AG04450 (cell line): ENCODE measurements at regions of chr1 and their contacts with region 1.

Region 1: GRCh38 chr1:15288173-15288926 is 41.3 kb downstream of the FHAD1 start:
- DNase-seq: no peak
- H3K4me3 ChIP-seq: no peak overlapping the region
- H3K27ac ChIP-seq: no peak overlapping the region
- H3K27me3 ChIP-seq: no peaks in the 10 kb centered on the region
- CTCF ChIP-seq: no peak

Region 2: DNA sequence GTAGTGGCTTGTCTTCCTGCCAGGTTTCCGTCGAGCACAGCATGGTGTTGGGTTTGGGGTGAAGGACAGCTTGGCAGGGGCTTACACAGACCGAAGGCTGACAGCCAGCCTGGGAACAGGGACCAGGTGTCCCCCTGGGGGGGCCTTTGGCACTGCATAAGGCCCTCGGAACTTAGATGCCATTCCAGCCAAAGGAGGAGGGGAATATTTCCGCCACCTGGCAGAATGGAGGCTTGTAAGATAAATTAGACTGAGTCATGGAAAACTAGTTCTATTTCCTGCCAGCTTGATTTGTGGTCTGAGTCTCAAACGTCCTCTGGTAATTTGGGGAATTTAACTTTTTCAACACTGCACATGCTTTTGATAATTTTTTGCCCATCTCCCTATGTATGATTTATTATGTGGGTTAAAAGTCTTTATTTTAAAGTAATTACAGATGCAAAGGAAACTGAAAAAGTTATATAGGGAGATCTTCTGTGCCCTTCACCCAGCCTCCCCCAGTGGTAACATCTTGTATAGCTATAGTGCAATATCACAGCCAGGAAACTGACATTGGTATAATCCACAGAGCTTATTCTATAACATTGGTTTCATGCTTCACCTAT is 146.3 kb before region 1 on chr1:
- CTCF ChIA-PET with region 1: no interaction called
- POLR2A ChIA-PET with region 1: no interaction called
- DNase-seq: no peak
- H3K4me3 ChIP-seq: no peak overlapping the region
- H3K27ac ChIP-seq: no peak overlapping the region
- H3K27me3 ChIP-seq: peaks cover 11% of the 10 kb centered on the region
- CTCF ChIP-seq: peak; percentile 12; the same call in 1 of the 2 replicates

Region 3: GRCh38 chr1:15304701-15305467 is 16.5 kb after region 1 on chr1:
- CTCF ChIA-PET with region 1: interaction called, 14 read pairs
- POLR2A ChIA-PET with region 1: no interaction called
- DNase-seq: no peak
- H3K4me3 ChIP-seq: no peak overlapping the region
- H3K27ac ChIP-seq: no peak overlapping the region
- H3K27me3 ChIP-seq: peaks cover 3% of the 10 kb centered on the region
- CTCF ChIP-seq: peak; percentile 74

Region 4: DNA sequence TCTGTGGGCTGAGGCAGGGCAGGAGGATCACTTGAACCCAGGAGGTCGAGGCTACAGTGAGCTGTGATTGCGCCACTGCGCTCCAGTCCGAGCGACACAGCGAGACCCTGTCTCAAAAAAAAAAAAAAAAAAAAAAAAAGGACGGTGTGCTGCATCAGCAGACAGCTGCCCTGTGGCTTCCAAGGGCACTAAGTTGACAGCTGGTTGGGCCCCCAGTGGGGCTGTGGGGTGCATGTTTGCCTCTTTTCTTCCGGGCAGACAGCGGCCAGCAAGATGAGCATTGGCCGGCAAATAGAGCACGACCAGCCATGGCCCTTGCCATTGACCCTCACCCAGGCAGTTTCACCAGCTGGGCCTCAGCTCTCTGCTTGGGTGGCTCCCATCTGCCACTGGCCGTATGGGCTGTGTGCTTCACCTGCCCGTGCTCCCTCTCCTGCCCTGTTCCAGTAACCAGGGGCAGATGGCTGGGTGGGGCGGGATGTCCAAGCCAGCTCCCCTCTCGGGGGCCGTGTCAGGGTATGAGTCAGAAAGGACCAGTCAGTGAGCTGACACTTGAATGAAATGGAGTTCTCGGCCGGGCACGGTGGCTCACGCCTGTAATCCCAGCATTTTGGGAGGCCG is 435.4 kb after region 1 on chr1:
- CTCF ChIA-PET with region 1: no interaction called
- POLR2A ChIA-PET with region 1: no interaction called
- DNase-seq: no peak
- H3K4me3 ChIP-seq: no peak overlapping the region
- H3K27ac ChIP-seq: no peak overlapping the region
- H3K27me3 ChIP-seq: no peaks in the 10 kb centered on the region
- CTCF ChIP-seq: no peak